ENCODE measurements at regions of chr19 and their contacts with region 1.

Region 1: DNA sequence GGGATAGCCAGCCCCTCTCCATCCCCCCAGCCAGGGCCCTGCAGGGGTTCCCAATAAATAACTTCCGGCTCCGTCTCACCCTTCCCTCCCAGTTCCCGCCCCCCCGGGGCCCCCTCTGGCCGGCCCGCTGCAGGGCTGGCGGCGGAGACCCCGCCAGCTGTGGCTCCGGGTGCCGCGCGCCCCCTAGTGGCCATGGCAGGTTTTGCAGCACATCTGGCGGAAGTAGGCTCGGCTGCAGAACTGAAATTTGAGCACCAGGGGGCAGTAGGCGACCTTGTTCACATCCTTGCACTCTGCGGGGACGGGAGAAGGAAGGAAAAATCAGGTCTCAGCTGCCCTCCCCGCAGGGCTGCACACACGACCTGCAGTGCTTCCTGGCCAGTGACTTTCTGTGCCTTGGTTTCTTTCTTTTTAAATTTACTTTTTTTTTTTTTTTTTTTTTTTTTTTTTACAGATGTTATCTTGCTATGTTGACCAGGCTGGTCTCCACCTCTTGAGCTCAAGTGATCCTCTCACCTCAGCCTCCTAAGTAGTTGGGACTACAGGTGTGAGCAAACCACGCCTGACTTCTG is 3.6 kb upstream of the MYO1F start:
- DNase-seq: no peak
- H3K4me3 ChIP-seq: no peak overlapping the region
- H3K27me3 ChIP-seq: no peaks in the 10 kb centered on the region; the same call in 1 of the 2 replicates
- CTCF ChIP-seq: peak; percentile 96

Region 2: GRCh38 chr19:8412783-8413628 is 167.8 kb before region 1 on chr19 and contains the start of gene MARCHF2:
- CTCF ChIA-PET with region 1: interaction called, 12 read pairs
- POLR2A ChIA-PET with region 1: no interaction called
- DNase-seq: peak; percentile 76
- H3K4me3 ChIP-seq: peak within 1 kb of the TSS; percentile 55
- H3K27me3 ChIP-seq: no peaks in the 10 kb centered on the region
- CTCF ChIP-seq: peak; percentile 65
- polyA plus RNA-seq, gene MARCHF2: 27.3 and 39.3 TPM in 2 replicates

Region 3: GRCh38 chr19:8513687-8514504 is 66.9 kb before region 1 on chr19 and contains the start of gene ZNF414:
- CTCF ChIA-PET with region 1: interaction called, 17 read pairs
- POLR2A ChIA-PET with region 1: no interaction called
- DNase-seq: peak; percentile 89
- H3K4me3 ChIP-seq: peak within 1 kb of the TSS; percentile 84
- H3K27me3 ChIP-seq: no peaks in the 10 kb centered on the region
- CTCF ChIP-seq: no peak
- polyA plus RNA-seq, gene ZNF414: 3.7 and 5.7 TPM in 2 replicates

Region 4: DNA sequence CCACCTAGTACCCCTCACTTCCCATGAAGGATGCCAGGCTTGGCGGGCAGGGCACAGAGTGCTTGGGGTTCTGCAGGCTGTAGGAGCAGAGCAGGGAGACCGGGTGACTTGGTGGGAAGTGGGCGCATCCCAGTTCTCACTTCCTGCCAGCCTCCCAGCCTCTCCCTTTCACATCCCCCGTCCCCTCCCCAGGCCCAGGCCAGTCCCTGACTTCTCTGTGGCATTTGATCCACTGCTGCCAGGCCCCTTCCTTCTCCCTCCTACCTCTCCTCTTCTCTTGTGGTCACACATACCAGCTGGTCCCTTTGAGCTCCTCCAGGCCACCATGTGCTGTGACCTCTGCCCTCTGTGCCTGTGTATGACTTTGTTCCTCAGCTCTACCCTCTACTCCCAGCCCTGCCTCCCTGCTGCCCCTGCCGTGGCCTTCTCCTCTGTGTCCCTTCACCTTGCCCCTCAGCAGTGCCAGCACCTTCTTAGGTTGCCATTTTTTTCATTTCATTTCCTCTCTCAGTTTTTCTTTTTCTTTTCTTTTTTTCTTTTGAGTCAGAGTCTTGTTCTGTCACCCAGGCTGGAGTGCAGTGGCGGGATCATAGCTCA is 23.1 kb before region 1 on chr19:
- CTCF ChIA-PET with region 1: interaction called, 11 read pairs
- POLR2A ChIA-PET with region 1: no interaction called
- DNase-seq: no peak
- H3K4me3 ChIP-seq: no peak overlapping the region
- H3K27me3 ChIP-seq: no peaks in the 10 kb centered on the region
- CTCF ChIP-seq: no peak

Region 5: GRCh38 chr19:8592231-8593009 is 11.6 kb after region 1 on chr19:
- CTCF ChIA-PET with region 1: interaction called, 64 read pairs
- POLR2A ChIA-PET with region 1: interaction called, 11 read pairs
- DNase-seq: peak; percentile 71
- H3K4me3 ChIP-seq: peak overlapping the region; percentile 20
- H3K27me3 ChIP-seq: no peaks in the 10 kb centered on the region
- CTCF ChIP-seq: no peak

Region 6: GRCh38 chr19:8681345-8682029 is 100.7 kb after region 1 on chr19:
- CTCF ChIA-PET with region 1: no interaction called
- POLR2A ChIA-PET with region 1: no interaction called
- DNase-seq: no peak
- H3K4me3 ChIP-seq: no peak overlapping the region
- H3K27me3 ChIP-seq: no peaks in the 10 kb centered on the region
- CTCF ChIP-seq: no peak

Region 7: DNA sequence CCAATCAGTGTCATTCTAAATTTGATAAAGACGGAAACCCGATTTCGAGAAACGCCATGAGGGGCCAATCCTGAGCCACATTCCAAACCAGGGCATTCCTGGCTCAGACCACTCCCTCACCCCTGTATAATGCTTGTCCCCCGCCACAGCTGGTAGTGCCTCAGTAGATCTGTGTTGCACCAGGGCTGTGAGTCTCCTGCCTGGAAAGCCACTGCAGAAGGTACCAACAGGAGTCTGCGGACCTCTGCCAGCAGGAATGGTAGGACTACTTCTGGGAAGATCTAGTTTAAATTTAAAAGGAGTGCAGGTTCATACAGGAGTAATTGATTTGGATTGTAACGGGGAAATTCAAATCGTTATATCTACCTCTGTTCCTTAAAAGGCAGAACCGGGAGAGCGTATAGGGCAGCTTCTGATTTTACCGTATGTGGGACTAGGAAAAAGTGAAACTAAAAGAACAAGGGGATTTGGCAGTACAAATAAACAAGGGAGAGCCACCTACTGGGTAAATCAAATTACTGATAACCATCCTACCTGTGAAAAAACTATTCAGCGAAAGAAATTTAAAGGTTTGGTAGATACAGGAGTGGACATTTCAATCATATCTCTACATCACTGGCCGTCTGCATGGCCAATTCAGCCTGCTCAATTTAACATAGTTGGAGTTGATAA is 875.4 kb after region 1 on chr19:
- CTCF ChIA-PET with region 1: no interaction called
- POLR2A ChIA-PET with region 1: no interaction called
- DNase-seq: no peak
- H3K4me3 ChIP-seq: no peak overlapping the region
- H3K27me3 ChIP-seq: no peaks in the 10 kb centered on the region
- CTCF ChIP-seq: no peak